Activated CD8-positive, alpha-beta T cell treated with anti-CD3 and anti-CD28 coated beads for 36 hours (primary cell): ENCODE measurements at regions of chr7 and their contacts with region 1.

Region 1: GRCh38 chr7:15937571-15937970 is 251.1 kb upstream of the MEOX2 start:
- DNase-seq: no peak
- ATAC-seq: no peak
- H3K4me3 Mint-ChIP-seq: no peak overlapping the region
- H3K27ac Mint-ChIP-seq: no peak overlapping the region
- H3K4me1 Mint-ChIP-seq: no peaks in the 10 kb centered on the region
- H3K27me3 Mint-ChIP-seq: no peaks in the 10 kb centered on the region
- CTCF ChIP-seq: no peak

Region 2: DNA sequence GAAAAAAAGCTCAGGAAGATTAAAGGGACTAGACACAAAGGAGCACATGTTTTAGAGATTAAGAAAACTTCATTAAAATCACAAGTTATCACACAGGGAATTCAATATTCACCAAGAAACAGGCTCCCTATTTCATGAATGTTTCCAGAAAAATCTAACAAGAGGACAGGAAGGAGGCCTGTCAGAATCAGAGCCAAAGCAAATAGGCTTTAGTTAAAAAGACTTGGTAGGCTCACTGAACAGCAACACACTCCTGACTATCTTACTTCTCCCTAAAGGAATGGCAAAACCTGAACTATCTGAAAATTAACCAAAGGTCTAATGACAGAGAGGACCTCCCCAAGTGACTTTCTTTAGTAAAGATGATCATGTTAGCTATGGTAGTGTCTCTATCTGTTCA is 62.8 kb before region 1 on chr7:
- CTCF ChIA-PET with region 1: interaction called, 3 read pairs
- POLR2A ChIA-PET with region 1: no interaction called
- intact Hi-C with region 1: loop called (anchors 10 kb)
- DNase-seq: no peak
- ATAC-seq: no peak
- H3K4me3 Mint-ChIP-seq: no peak overlapping the region
- H3K27ac Mint-ChIP-seq: no peak overlapping the region
- H3K4me1 Mint-ChIP-seq: no peaks in the 10 kb centered on the region
- H3K27me3 Mint-ChIP-seq: no peaks in the 10 kb centered on the region
- CTCF ChIP-seq: no peak